Pancreas (tissue), 10 donors: ENCODE measurements at regions of chr5 and their contacts with region 1.

Region 1: DNA sequence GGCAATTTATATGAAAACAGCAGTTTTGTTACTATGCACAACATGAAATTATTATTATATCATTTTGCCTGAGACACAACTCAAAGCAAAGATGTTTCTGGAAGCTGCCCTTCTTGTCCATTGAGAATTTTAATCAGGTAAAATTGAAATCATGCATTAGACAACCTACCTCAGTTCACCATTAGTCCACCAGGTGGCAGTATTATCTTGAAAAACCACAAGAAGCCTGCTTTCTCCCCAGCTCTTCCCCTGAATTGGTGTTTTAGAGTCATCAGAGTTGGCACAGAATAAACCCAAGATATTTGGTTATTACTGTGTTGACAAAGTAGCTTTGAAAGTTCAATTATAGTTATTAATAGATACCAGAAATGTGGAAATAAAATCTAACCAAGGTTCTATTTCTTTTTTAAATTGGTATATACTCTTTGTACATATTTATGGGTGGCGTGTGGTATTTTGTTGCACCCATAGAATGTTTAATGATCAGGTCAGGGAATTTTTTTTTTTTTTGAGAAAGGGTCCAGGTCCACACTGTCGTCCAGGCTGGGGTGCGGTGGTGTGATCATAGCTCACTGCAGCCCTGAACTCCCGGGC is 25.7 kb downstream of the UTP15 start:
- DNase-seq: peak in 3 of 6 donors; percentile 43 to 70 (median 44)
- ATAC-seq: peak; percentile 80 to 98 (median 96)
- H3K4me3 ChIP-seq: no peak overlapping the region
- H3K27ac ChIP-seq: no peak overlapping the region
- H3K4me1 ChIP-seq: no peaks in the 10 kb centered on the region
- H3K27me3 ChIP-seq: no peaks in the 10 kb centered on the region
- CTCF ChIP-seq: peak; percentile 51 to 87 (median 78)

Region 2: GRCh38 chr5:73152411-73153388 is 438.5 kb before region 1 on chr5:
- intact Hi-C with region 1: no loop called
- DNase-seq: no peak
- ATAC-seq: peak in 1 of 4 donors; percentile 26
- H3K4me3 ChIP-seq: no peak overlapping the region
- H3K27ac ChIP-seq: no peak overlapping the region
- H3K4me1 ChIP-seq: no peaks in the 10 kb centered on the region
- H3K27me3 ChIP-seq: no peaks in the 10 kb centered on the region
- CTCF ChIP-seq: no peak

Region 3: GRCh38 chr5:73471654-73472053 is 119.5 kb before region 1 on chr5:
- intact Hi-C with region 1: no loop called
- DNase-seq: no peak
- ATAC-seq: no peak
- H3K4me3 ChIP-seq: no peak overlapping the region
- H3K27ac ChIP-seq: no peak overlapping the region
- H3K4me1 ChIP-seq: no peaks in the 10 kb centered on the region
- H3K27me3 ChIP-seq: no peaks in the 10 kb centered on the region
- CTCF ChIP-seq: no peak

Region 4: GRCh38 chr5:73792687-73793320 is 201.6 kb after region 1 on chr5:
- intact Hi-C with region 1: loop called (anchors 5 to 10 kb)
- DNase-seq: peak; percentile 40 to 82 (median 74)
- ATAC-seq: peak; percentile 88 to 94 (median 94)
- H3K4me3 ChIP-seq: no peak overlapping the region
- H3K27ac ChIP-seq: no peak overlapping the region
- H3K4me1 ChIP-seq: peaks cover 0 to 12% (median 5%) of the 10 kb centered on the region in 3 donors
- H3K27me3 ChIP-seq: no peaks in the 10 kb centered on the region
- CTCF ChIP-seq: peak; percentile 83 to 94 (median 91)